Activated CD4-positive, alpha-beta memory T cell treated with anti-CD3 and anti-CD28 coated beads for 36 hours (primary cell): ENCODE measurements at regions of chr3 and their contacts with region 1.

Region 1: DNA sequence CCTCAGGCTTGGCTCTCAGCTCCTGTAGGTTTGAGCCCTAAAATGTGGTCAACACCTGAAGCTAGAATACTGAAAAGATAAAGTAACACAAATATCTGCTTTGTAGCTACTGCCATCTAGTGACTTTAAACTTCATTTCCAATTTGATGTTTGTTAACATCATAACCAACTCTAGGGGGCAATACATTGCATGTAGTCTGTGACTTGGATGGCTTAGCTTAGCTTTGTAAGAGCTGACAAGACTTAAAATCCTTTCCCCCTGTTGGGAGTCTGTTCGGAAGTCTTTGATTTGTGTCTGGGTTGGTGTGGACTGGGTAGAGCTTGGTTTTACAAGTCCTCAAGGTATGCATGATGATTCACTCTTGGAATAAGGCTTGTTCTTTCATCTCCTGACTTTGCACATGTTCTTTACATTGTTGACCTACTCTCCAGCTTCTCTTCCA is 51.7 kb downstream of the SCN11A start:
- DNase-seq: no peak
- H3K4me3 Mint-ChIP-seq: no peak overlapping the region
- H3K27ac Mint-ChIP-seq: no peak overlapping the region
- H3K4me1 Mint-ChIP-seq: no peaks in the 10 kb centered on the region
- H3K27me3 Mint-ChIP-seq: peaks cover 2% of the 10 kb centered on the region

Region 2: GRCh38 chr3:38738630-38739395 is 261.2 kb before region 1 on chr3:
- CTCF ChIA-PET with region 1: interaction called, 7 read pairs
- POLR2A ChIA-PET with region 1: no interaction called
- intact Hi-C with region 1: loop called (anchors 1 kb)
- DNase-seq: peak; percentile 55
- H3K4me3 Mint-ChIP-seq: no peak overlapping the region
- H3K27ac Mint-ChIP-seq: no peak overlapping the region
- H3K4me1 Mint-ChIP-seq: no peaks in the 10 kb centered on the region
- H3K27me3 Mint-ChIP-seq: peaks cover 2% of the 10 kb centered on the region

Region 3: DNA sequence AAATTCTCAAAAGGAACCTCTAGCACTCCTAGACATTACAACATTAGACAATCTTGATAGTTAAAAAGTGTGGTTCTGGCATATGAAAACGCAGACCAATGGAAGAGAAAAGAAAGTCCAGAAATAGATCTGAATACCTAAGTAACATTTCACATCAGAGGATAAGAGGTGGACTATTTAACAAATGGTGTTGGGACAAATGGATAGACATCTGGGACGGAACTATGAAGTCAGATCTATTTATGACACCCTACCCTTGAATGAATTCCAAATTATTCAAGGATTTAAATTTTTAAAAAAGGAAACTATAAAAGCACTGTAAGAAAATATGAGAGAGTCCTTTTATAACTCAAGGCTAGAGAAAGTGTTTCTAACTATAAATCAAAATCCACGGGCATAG is 59.6 kb before region 1 on chr3:
- CTCF ChIA-PET with region 1: no interaction called
- POLR2A ChIA-PET with region 1: no interaction called
- intact Hi-C with region 1: no loop called
- DNase-seq: no peak
- H3K4me3 Mint-ChIP-seq: no peak overlapping the region
- H3K27ac Mint-ChIP-seq: no peak overlapping the region
- H3K4me1 Mint-ChIP-seq: no peaks in the 10 kb centered on the region
- H3K27me3 Mint-ChIP-seq: peaks cover 1% of the 10 kb centered on the region

Region 4: DNA sequence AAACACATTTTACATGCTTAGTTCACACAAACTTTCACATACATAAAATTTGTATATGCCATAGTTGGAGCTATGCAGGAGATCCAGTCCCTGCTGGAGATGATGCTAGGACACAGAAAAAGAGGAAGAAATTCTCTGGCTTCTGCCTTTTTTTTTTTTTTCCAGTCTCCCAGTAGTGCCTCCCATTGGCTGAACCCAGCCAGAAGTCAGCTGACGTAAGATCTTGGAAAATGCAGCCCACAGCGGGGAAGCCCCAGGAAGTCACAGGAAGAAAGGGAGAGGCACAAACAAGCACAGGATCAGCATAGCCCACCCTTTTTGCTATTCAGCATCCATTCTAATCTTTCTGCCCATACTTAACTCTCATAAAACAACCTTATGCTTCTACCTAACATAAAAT is 13.3 kb after region 1 on chr3:
- CTCF ChIA-PET with region 1: interaction called, 19 read pairs
- POLR2A ChIA-PET with region 1: interaction called, 3 read pairs
- intact Hi-C with region 1: no loop called
- DNase-seq: no peak
- H3K4me3 Mint-ChIP-seq: no peak overlapping the region
- H3K27ac Mint-ChIP-seq: no peak overlapping the region
- H3K4me1 Mint-ChIP-seq: no peaks in the 10 kb centered on the region
- H3K27me3 Mint-ChIP-seq: peaks cover 12% of the 10 kb centered on the region

Region 5: GRCh38 chr3:39029556-39029955 is 29.5 kb after region 1 on chr3:
- CTCF ChIA-PET with region 1: interaction called, 11 read pairs
- POLR2A ChIA-PET with region 1: no interaction called
- intact Hi-C with region 1: no loop called
- DNase-seq: no peak
- H3K4me3 Mint-ChIP-seq: no peak overlapping the region
- H3K27ac Mint-ChIP-seq: no peak overlapping the region
- H3K4me1 Mint-ChIP-seq: no peaks in the 10 kb centered on the region
- H3K27me3 Mint-ChIP-seq: peaks cover 11% of the 10 kb centered on the region